ENCODE measurements at regions of chr16 and their contacts with region 1.

Region 1: DNA sequence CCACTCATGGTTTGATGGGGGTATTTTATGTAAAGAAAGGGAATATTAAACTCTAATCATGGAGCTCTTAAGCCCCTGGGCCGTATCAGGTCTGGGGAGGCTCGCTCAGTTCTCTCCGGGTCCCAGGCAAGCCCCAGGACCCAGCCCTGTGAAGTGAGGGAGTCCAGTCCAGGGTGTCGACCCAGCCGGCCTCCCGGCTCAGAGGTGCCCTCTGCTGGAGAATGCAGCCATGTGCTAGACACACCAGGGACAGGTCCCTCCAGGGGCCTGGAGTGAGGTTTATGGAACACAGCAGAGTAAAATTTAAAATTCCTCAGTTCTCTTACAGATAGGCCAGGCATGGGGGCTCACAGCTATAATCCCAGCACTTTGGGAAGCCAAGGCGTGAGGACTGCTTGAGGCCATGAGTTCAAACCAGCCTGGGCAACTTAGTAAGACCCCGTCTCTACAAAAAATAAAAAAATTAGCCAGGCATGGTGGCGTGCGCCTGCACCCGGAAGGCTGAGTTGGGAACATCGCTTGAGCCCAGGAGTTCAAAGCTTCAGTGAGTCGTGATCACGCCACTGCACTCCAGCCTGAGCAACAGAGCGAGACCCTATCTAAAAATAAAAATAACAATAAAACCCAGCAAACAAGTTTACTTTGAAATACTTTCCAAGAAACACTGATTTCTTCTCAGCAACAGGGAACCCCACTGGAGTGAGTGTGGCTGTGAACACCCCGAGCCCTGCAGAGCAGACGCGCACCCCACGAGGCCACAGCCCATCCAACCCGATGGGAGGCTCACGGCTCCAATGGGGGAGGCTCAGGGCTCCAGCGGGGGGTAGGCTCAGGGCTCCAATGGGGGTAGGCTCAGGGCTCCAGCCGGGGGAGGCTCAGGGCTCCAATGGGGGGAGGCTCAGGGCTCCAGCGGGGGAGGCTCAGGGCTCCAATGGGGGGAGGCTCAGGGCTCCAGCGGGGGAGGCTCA is 72.2 kb downstream of the ZNF778 start:
- DNase-seq: peak; percentile 70
- ATAC-seq: peak; percentile 80 to 87

Region 2: GRCh38 chr16:89253548-89254287 is 36.0 kb before region 1 on chr16:
- intact Hi-C with region 1: loop called in 1 of 2 experiments (anchors 5 kb)
- DNase-seq: no peak
- ATAC-seq: no peak

Region 3: DNA sequence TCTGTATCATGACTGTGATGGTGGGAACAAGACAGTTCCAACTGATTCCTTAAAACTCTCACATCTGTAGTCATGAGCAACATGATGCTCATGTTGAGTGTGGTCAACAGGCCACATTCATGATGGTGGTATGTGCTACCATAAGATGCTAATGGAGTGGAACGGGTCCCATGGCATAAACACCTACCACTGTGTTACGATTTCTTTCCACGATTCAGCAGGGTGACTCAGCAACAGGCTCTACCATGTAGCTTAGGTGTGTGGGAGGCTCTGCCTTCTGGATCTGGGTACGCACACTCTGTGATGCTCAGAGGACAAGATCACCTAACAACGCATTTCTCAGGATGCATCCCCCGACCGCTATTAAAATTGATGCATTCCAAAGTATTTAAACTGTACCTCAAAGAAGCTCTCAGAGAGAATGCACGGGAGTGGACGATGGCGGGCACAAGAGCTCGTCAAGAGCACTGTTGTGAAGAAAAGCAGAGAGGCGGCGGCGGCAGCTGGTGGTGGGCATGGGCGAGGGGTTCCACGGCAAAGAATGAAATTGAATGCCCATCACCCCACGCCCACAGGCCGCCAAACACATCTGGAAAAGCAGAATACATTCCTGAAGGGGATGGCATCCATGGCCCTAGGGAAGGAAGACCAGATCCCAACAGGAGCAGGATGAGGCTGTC is 61.1 kb after region 1 on chr16:
- intact Hi-C with region 1: loop called in 1 of 2 experiments (anchors 2 kb)
- DNase-seq: no peak
- ATAC-seq: no peak

Measured in left cardiac atrium (tissue), 4 donors.